ENCODE measurements at regions of chr17 and their contacts with region 1.

Region 1: GRCh38 chr17:46044286-46044928 is 45.4 kb downstream of the STH start:
- DNase-seq: peak in 1 of 2 donors; percentile 91
- H3K4me3 ChIP-seq: no peak overlapping the region
- H3K27ac ChIP-seq: peak overlapping the region in 1 of 2 donors; percentile 58
- H3K4me1 ChIP-seq: peaks cover 0 to 4% of the 10 kb centered on the region in 2 donors
- H3K27me3 ChIP-seq: no peaks in the 10 kb centered on the region
- CTCF ChIP-seq: peak; percentile 88 to 94 (median 91)

Region 2: GRCh38 chr17:46002311-46002972 is 42.0 kb before region 1 on chr17:
- intact Hi-C with region 1: loop called (anchors 5 kb)
- DNase-seq: peak; percentile 17 to 86
- H3K4me3 ChIP-seq: no peak overlapping the region
- H3K27ac ChIP-seq: no peak overlapping the region
- H3K4me1 ChIP-seq: peaks cover 0 to 5% of the 10 kb centered on the region in 2 donors
- H3K27me3 ChIP-seq: no peaks in the 10 kb centered on the region
- CTCF ChIP-seq: peak; percentile 86 to 98 (median 97)

Region 3: DNA sequence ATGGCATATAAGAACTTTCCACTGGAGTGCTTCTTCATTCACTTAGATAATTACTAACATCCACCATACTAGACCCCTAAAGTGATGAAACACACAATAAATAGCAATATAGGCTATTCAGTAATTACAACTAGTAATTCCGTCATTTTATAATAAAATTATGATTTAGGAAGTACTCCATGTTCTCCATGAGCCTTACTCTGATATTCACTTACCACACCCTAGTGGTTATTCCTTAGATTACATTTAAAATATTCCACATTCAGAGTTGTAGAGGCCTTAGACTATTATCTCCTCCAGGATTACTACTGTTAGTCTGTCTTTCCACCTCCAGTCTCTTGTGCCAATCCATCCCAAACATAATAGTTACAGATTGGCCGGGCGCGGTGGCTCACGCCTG is 17.0 kb after region 1 on chr17:
- intact Hi-C with region 1: no loop called
- DNase-seq: no peak
- H3K4me3 ChIP-seq: no peak overlapping the region
- H3K27ac ChIP-seq: no peak overlapping the region
- H3K4me1 ChIP-seq: no peaks in the 10 kb centered on the region
- H3K27me3 ChIP-seq: no peaks in the 10 kb centered on the region
- CTCF ChIP-seq: peak in 2 of 3 experiments; percentile 24 to 27

Region 4: DNA sequence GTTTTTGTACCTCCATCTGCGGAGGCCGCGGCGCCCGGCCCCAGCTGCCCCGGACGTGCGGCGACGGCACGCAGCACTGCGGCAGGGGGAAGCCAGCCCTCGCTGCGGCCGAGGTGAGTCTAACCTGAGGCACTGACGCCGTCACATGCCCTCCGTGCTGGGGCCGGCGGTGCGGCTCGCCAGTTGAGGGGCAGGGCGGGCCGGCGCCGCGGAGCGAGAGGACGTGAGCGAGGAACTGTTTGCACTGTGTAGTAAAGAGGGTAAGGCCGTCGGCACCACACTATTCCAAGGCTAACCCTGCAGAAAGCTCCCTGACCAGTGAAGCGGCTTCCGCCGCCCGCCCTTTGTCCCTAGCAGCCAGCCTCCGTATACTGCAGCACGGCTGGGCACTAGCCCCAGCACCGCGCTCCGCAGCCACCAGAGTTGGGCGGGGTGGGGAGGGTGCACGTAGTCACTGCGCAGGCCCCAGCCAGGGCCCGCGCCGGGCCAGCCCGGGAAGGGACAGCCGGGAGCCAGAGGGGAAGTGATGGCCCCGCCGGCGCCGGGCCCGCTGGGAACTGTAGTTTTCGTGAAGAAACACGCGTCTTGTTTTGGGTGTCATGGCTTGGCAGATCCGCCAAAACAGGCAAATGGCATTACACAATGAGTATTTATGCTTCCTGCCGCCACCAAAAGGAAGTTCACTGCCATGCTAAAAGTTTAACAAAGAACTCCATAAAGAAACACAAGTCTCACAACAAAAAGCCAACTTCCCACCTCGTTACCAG is 149.4 kb after region 1 on chr17:
- intact Hi-C with region 1: loop called (anchors 2 kb)
- DNase-seq: peak; percentile 83 to 98
- H3K4me3 ChIP-seq: peak overlapping the region; percentile 99 to 100
- H3K27ac ChIP-seq: peak overlapping the region; percentile 99 to 100
- H3K4me1 ChIP-seq: peaks cover 13 to 33% of the 10 kb centered on the region in 2 donors
- H3K27me3 ChIP-seq: no peaks in the 10 kb centered on the region
- CTCF ChIP-seq: peak in 2 of 3 experiments; percentile 2 to 17